Activated T-helper 1 cell treated with anti-CD3 and anti-CD28 coated beads, Interleukin-12 subunit alpha, Interleukin-12 subunit beta, Interleukin-2, Interleukin-4 antibody, amounts not matched to agents 30 ng/mL and 10 ng/mL and 1 ng/mL, durations not matched to agents 14 hours and 24 hours and 36 hours (primary cell): ENCODE measurements at regions of chr6 and their contacts with region 1.

Region 1: GRCh38 chr6:149484733-149485700 is at the start of gene ZC3H12D:
- DNase-seq: peak; percentile 76
- H3K4me3 Mint-ChIP-seq: peak within 1 kb of the TSS; percentile 92
- H3K27ac Mint-ChIP-seq: peak within 1 kb of the TSS; percentile 99
- H3K4me1 Mint-ChIP-seq: peaks cover 74% of the 10 kb centered on the region
- H3K27me3 Mint-ChIP-seq: no peaks in the 10 kb centered on the region
- total RNA-seq, gene ZC3H12D: 94.7 and 96.7 TPM in 2 replicates

Region 2: GRCh38 chr6:149499066-149499465 is 14.0 kb after region 1 on chr6:
- intact Hi-C with region 1: loop called (anchors 1 kb)
- DNase-seq: no peak
- H3K4me3 Mint-ChIP-seq: no peak overlapping the region
- H3K27ac Mint-ChIP-seq: peak overlapping the region; percentile 83
- H3K4me1 Mint-ChIP-seq: peaks cover 78% of the 10 kb centered on the region
- H3K27me3 Mint-ChIP-seq: no peaks in the 10 kb centered on the region

Region 3: GRCh38 chr6:149508485-149508884 is 23.5 kb after region 1 on chr6:
- intact Hi-C with region 1: loop called (anchors 1 kb)
- DNase-seq: peak; percentile 39
- H3K4me3 Mint-ChIP-seq: peak overlapping the region; percentile 13
- H3K27ac Mint-ChIP-seq: peak overlapping the region; percentile 81
- H3K4me1 Mint-ChIP-seq: peaks cover 53% of the 10 kb centered on the region
- H3K27me3 Mint-ChIP-seq: no peaks in the 10 kb centered on the region